Ascending aorta (tissue), 2 donors: ENCODE measurements at regions of chr4 and their contacts with region 1.

Region 1: GRCh38 chr4:112284662-112285411 is 867 bp downstream of the TIFA start:
- DNase-seq: no peak
- H3K4me3 ChIP-seq: peak overlapping the region; percentile 75 to 82
- H3K27ac ChIP-seq: peak overlapping the region; percentile 80 to 82
- H3K4me1 ChIP-seq: peaks cover 0 to 5% of the 10 kb centered on the region in 2 donors
- H3K27me3 ChIP-seq: no peaks in the 10 kb centered on the region
- CTCF ChIP-seq: no peak

Region 2: GRCh38 chr4:112296949-112297880 is 12.4 kb after region 1 on chr4 and contains the start of gene ALPK1:
- intact Hi-C with region 1: no loop called
- DNase-seq: no peak
- H3K4me3 ChIP-seq: peak within 1 kb of the TSS; percentile 53 to 59
- H3K27ac ChIP-seq: peak within 1 kb of the TSS; percentile 72 to 84
- H3K4me1 ChIP-seq: peaks cover 0 to 9% of the 10 kb centered on the region in 2 donors
- H3K27me3 ChIP-seq: no peaks in the 10 kb centered on the region
- CTCF ChIP-seq: no peak
- total RNA-seq, gene ALPK1: 8.7 TPM

Region 3: GRCh38 chr4:112321776-112322684 is 37.2 kb after region 1 on chr4:
- intact Hi-C with region 1: loop called (anchors 5 kb)
- DNase-seq: peak in 1 of 2 donors; percentile 85
- H3K4me3 ChIP-seq: no peak overlapping the region
- H3K27ac ChIP-seq: no peak overlapping the region
- H3K4me1 ChIP-seq: no peaks in the 10 kb centered on the region
- H3K27me3 ChIP-seq: no peaks in the 10 kb centered on the region
- CTCF ChIP-seq: peak; percentile 19 to 84 (median 79)

Region 4: DNA sequence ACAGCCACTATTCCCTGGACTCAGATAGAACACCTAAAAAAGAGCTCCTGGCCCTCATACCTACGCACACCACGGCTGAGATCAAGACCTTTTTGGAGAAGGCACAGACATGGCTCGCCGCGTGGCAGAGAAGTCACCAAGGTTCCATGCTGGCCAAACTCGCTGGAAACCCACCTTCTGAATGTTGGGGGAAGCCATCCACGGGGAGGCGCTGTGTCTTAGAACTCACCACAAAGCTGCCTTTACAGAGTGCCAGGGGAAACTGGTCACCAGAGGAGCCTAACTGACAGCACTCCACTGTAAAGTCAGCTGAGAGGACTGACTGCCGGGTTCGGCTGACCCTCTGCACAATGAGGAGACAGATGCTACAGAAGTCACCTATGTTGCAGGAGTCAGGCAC is 133.3 kb after region 1 on chr4:
- intact Hi-C with region 1: no loop called
- DNase-seq: no peak
- H3K4me3 ChIP-seq: no peak overlapping the region
- H3K27ac ChIP-seq: no peak overlapping the region
- H3K4me1 ChIP-seq: no peaks in the 10 kb centered on the region
- H3K27me3 ChIP-seq: no peaks in the 10 kb centered on the region
- CTCF ChIP-seq: no peak